K562 (cell line): ENCODE measurements at regions of chr17 and their contacts with region 1.

Region 1: GRCh38 chr17:70552230-70552981 is 383.1 kb downstream of the KCNJ2 start:
- DNase-seq: peak; percentile 8 to 29 (median 14)
- ATAC-seq: no peak
- H3K4me3 ChIP-seq: no peak overlapping the region
- H3K27ac ChIP-seq: no peak overlapping the region
- H3K4me1 ChIP-seq: no peaks in the 10 kb centered on the region
- H3K27me3 ChIP-seq: no peaks in the 10 kb centered on the region
- CTCF ChIP-seq: peak in 2 of 3 experiments; percentile 31 to 46; a peak in 3 of 6 replicates
- EP300 ChIP-seq: no peak
- POLR2A ChIP-seq: no peak
- RAD21 ChIP-seq: peak; percentile 43 to 61

Region 2: DNA sequence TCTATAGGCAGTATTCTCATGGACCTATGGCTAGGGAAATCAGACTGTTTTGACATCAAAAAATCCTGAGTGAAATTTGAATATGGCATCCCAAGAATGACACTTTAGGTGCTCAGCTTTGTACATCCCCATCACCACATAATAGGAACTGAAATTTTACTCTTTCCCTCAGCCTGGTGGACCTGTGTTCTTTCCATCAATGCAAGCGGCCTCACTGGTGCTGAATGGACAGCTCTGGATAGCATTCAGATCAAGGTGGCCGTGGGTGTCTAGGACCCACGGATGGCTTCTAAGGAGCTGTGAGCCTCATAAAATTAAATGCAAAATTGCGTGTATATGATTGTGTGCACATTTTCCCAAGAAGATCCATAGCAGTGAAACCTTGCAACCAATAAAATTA is 985.3 kb before region 1 on chr17:
- CTCF ChIA-PET with region 1: interaction called, 3 read pairs
- POLR2A ChIA-PET with region 1: no interaction called
- in situ Hi-C with region 1: no loop called
- intact Hi-C with region 1: loop called (anchors 5 kb)
- DNase-seq: no peak
- ATAC-seq: no peak
- H3K4me3 ChIP-seq: no peak overlapping the region
- H3K27ac ChIP-seq: no peak overlapping the region
- H3K4me1 ChIP-seq: no peaks in the 10 kb centered on the region
- H3K27me3 ChIP-seq: no peaks in the 10 kb centered on the region
- CTCF ChIP-seq: no peak
- EP300 ChIP-seq: no peak
- POLR2A ChIP-seq: no peak
- RAD21 ChIP-seq: no peak